Activated naive CD8-positive, alpha-beta T cell treated with anti-CD3 and anti-CD28 coated beads, Interleukin-2, amount 10 ng/mL, durations not matched to agents 7 days and 5 days (primary cell): ENCODE measurements at regions of chr22 and their contacts with region 1.

Region 1: GRCh38 chr22:30178181-30179126 is 68.1 kb downstream of the LIF start:
- DNase-seq: peak; percentile 48
- ATAC-seq: peak; percentile 74
- H3K4me3 Mint-ChIP-seq: peak overlapping the region; percentile 61
- H3K27ac Mint-ChIP-seq: peak overlapping the region; percentile 93
- H3K4me1 Mint-ChIP-seq: peaks cover 78% of the 10 kb centered on the region
- H3K27me3 Mint-ChIP-seq: no peaks in the 10 kb centered on the region

Region 2: GRCh38 chr22:30159561-30160353 is 18.7 kb before region 1 on chr22:
- POLR2A ChIA-PET with region 1: no interaction called
- DNase-seq: no peak
- ATAC-seq: no peak
- H3K4me3 Mint-ChIP-seq: peak overlapping the region; percentile 6
- H3K27ac Mint-ChIP-seq: peak overlapping the region; percentile 86
- H3K4me1 Mint-ChIP-seq: peaks cover 44% of the 10 kb centered on the region
- H3K27me3 Mint-ChIP-seq: no peaks in the 10 kb centered on the region

Region 3: GRCh38 chr22:30214703-30215407 is 36.4 kb after region 1 on chr22:
- POLR2A ChIA-PET with region 1: interaction called, 40 read pairs
- DNase-seq: no peak
- ATAC-seq: peak; percentile 38
- H3K4me3 Mint-ChIP-seq: peak overlapping the region; percentile 46
- H3K27ac Mint-ChIP-seq: peak overlapping the region; percentile 91
- H3K4me1 Mint-ChIP-seq: peaks cover 73% of the 10 kb centered on the region
- H3K27me3 Mint-ChIP-seq: no peaks in the 10 kb centered on the region